Transverse colon (tissue), 4 donors: ENCODE measurements at regions of chr12 and their contacts with region 1.

Region 1: GRCh38 chr12:810671-811415 is 58.5 kb downstream of the WNK1 start:
- DNase-seq: no peak
- H3K4me3 ChIP-seq: no peak overlapping the region
- H3K27ac ChIP-seq: no peak overlapping the region
- H3K4me1 ChIP-seq: peaks cover 0 to 52% (median 16%) of the 10 kb centered on the region in 4 donors
- H3K27me3 ChIP-seq: no peaks in the 10 kb centered on the region
- CTCF ChIP-seq: no peak
- EP300 ChIP-seq: no peak
- POLR2A ChIP-seq: no peak

Region 2: DNA sequence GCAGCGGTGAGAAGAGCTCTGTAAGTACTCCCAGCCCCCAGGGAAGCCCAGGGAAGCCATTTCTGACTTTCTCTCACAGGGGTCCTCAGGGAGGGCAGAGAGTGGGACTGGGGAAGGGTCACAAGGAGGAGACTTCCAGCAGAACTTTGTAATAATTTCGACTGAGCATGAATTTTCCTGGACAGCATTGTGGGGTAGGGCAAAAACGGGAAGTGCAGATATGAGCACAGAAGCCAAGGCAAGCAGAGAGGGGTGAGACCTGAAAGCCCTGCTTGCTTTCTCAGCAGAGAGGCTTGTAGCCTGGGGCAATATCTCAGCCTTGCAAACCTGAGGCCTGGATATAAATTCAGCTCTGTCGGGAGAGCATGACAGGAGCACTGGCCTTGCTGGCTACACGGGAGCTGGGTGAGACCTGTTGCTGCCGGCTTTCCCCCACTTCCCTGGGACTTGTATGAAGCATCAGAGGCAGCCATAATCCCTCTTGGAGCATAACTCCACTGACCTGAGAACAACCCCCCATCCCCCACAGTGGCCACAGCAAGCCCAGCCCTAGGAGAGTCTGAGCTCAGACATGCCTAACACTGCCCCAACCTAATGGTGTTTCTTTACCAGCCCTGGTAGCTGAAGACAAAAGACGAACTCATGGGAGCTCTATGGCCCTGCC is 754.0 kb before region 1 on chr12:
- in situ Hi-C with region 1: no loop called
- intact Hi-C with region 1: no loop called
- DNase-seq: no peak
- H3K4me3 ChIP-seq: no peak overlapping the region
- H3K27ac ChIP-seq: no peak overlapping the region
- H3K4me1 ChIP-seq: no peaks in the 10 kb centered on the region
- H3K27me3 ChIP-seq: peaks cover 74% of the 10 kb centered on the region
- CTCF ChIP-seq: no peak
- EP300 ChIP-seq: no peak
- POLR2A ChIP-seq: no peak

Region 3: DNA sequence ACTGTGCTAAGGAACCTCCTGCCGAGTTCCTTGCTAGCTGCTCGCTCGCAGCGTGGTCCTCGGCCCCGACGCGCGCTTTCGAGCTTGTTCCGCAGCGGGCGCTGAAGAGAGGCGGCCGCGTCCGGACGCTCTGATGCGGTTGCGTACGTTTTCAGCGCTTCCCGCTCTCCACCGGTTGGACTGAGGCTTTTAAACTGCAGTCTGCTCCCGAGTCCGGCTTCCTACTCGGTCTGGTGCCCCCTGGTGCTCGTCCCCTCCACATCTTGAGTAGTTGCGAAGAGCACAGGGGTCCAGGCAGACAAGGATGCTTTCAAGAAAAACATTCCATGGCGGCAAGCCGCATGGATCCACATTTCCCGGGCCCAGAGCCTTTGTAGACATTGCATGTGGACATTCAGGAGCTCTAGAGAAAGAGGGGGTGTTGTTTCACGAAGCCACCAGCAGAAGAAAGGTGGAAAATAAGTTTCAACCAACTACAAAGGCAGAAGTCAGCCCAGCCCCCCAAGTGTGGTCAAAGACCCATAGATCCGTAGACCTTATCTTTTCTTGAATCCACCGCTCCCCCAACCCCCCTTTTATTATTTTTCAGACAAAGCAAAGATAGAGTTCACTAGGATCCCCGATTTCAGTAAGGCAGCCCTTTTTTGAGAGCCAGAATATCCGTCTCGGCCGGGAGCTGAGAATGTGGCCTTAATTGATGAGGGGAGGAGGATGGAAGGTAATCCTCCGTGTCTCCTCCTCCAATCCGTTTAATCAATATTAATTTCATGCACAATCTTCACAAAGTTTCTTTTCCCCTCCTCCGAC is 59.4 kb before region 1 on chr12:
- in situ Hi-C with region 1: no loop called
- intact Hi-C with region 1: loop called (anchors 10 kb)
- DNase-seq: peak; percentile 93
- H3K4me3 ChIP-seq: peak overlapping the region; percentile 3 to 100 (median 98)
- H3K27ac ChIP-seq: peak overlapping the region; percentile 97 to 100 (median 100)
- H3K4me1 ChIP-seq: peaks cover 6 to 42% (median 24%) of the 10 kb centered on the region in 4 donors
- H3K27me3 ChIP-seq: no peaks in the 10 kb centered on the region
- CTCF ChIP-seq: peak; percentile 55 to 82 (median 63)
- EP300 ChIP-seq: no peak
- POLR2A ChIP-seq: peak; percentile 34

Region 4: GRCh38 chr12:761256-761655 is 49.6 kb before region 1 on chr12:
- in situ Hi-C with region 1: loop called in 1 of 4 experiments (anchors 10 kb)
- intact Hi-C with region 1: loop called (anchors 10 kb)
- DNase-seq: no peak
- H3K4me3 ChIP-seq: no peak overlapping the region
- H3K27ac ChIP-seq: no peak overlapping the region
- H3K4me1 ChIP-seq: peaks cover 3 to 42% (median 9%) of the 10 kb centered on the region in 4 donors
- H3K27me3 ChIP-seq: no peaks in the 10 kb centered on the region
- CTCF ChIP-seq: no peak
- EP300 ChIP-seq: no peak
- POLR2A ChIP-seq: no peak

Region 5: DNA sequence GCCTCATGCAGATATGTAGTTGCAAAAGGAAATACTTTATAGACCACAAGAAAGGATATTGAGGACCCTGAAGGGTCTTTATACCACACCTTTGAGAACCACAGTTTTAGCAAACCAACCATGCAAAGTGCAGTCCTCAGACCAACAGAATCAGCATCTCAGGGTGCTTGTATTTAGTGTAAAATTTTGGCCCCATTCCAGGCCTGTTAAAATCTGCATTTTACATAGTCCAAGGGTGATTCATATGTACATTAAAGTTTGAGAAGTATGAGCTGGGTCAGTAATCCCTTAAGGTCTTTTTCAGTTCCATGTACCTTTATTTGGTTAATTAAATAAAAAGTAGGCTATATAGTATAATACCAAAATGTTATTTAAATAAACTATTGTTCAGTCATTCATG is 32.8 kb after region 1 on chr12:
- in situ Hi-C with region 1: no loop called
- intact Hi-C with region 1: no loop called
- DNase-seq: no peak
- H3K4me3 ChIP-seq: no peak overlapping the region
- H3K27ac ChIP-seq: no peak overlapping the region
- H3K4me1 ChIP-seq: no peaks in the 10 kb centered on the region
- H3K27me3 ChIP-seq: no peaks in the 10 kb centered on the region
- CTCF ChIP-seq: no peak
- EP300 ChIP-seq: no peak
- POLR2A ChIP-seq: no peak